K562 (cell line): ENCODE measurements at regions of chr1 and their contacts with region 1.

Region 1: DNA sequence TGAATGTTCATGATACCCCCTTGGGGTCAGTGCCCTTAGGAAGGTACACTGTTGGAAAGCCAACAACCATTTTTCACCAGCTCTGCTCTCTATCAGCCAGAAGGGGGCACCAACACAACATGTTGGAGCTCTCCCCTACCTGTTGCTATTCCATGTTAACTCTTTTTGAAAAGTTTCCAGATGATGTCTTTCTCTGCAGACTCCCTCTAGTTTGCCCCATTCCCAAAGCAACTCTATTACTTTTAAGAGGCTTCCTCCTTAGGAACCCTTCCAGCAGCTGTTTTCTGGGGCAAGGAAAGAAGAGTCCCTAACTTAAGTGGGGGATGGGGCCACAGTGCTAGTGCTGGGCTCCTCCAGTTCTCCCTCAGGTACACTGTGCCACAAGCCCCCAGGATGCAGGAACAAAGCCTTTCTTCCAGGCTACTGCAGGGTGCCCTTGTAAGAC is 22.9 kb upstream of the NDC1 start:
- DNase-seq: peak; percentile 70 to 82 (median 80)
- ATAC-seq: peak; percentile 97
- H3K4me3 ChIP-seq: no peak overlapping the region
- H3K27ac ChIP-seq: no peak overlapping the region
- H3K4me1 ChIP-seq: no peaks in the 10 kb centered on the region
- H3K27me3 ChIP-seq: no peaks in the 10 kb centered on the region
- CTCF ChIP-seq: peak; percentile 87 to 95 (median 91)
- EP300 ChIP-seq: no peak
- POLR2A ChIP-seq: no peak
- RAD21 ChIP-seq: peak; percentile 81 to 92

Region 2: DNA sequence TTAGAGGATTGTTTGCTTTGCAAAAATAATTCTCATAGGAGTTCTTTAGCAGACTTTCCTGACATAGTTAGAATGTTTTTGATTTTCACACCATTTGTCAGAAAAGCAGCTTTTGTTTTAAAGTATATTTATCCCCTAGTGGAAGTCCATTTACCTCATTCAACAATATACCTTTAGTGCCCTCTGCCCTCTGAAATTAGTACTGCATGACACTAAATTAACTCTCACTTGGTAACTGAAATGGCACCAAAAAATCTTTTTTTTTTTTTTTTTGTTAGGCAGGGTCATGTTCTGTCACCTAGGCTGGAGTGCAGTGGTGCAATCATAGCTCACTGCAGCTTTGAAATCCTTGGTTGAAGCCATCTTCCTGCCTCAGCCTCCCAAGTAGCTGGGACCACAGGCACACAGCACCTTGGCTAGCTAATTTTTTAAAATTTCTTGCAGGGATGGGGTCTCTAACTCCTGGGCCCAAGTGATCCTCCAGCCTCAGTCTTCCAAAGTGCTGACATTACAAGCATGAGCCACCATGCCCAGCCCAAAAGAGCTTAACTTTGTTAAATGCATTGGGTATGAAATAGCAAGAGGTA is 98.8 kb after region 1 on chr1:
- CTCF ChIA-PET with region 1: interaction called, 18 read pairs
- POLR2A ChIA-PET with region 1: interaction called, 9 read pairs
- in situ Hi-C with region 1: no loop called
- intact Hi-C with region 1: loop called (anchors 1 kb)
- DNase-seq: peak in 3 of 4 experiments; percentile 35 to 45 (median 43)
- ATAC-seq: peak; percentile 76
- H3K4me3 ChIP-seq: no peak overlapping the region
- H3K27ac ChIP-seq: no peak overlapping the region
- H3K4me1 ChIP-seq: peaks cover 0 to 28% of the 10 kb centered on the region in 2 experiments; a peak in 3 of 5 replicates
- H3K27me3 ChIP-seq: no peaks in the 10 kb centered on the region
- CTCF ChIP-seq: peak; percentile 64 to 87 (median 87); a peak in 5 of 6 replicates
- EP300 ChIP-seq: no peak
- POLR2A ChIP-seq: no peak
- RAD21 ChIP-seq: peak; percentile 65 to 83

Region 3: DNA sequence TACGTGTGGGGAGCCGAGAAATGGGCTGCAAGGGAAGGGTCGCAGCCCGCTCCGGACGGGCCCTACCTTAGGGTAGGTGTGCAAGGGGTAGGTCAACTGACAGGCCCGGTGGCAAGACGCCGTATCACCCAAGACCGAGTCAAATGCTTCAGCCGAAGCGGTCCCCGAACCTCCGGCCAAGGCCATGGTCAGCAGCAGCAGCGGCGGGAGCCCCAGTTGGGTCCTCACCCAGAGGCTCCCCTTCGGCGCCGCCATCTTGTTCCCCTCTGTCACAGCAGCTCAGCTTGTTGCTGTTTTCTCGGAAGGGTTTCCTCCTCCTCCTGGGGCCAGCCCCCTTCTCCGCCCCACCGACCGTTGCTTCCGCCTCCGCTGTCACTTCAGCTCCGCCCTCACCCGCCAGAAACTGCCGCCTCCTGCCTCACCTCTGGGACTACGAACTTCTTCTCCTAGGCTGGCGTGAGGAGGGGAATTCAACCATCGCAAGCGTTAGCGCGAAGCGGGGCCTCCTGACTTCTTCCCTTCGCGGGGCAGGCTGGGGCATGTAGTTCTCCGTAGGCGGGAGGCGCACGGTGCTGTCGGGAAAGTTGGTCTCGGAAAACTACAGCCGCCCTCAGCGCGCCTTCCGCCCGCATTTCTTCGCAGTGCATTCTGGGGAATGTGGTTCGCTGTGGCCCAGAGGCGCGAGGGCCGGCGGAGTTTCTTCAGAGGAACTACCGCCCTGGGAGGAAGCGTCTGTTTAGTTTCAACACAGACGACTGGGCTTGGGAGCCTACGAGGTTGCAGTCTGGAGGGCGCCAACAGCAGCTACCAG is 192.2 kb after region 1 on chr1 and contains the starts of genes TCEANC2 and TMEM59:
- CTCF ChIA-PET with region 1: no interaction called
- POLR2A ChIA-PET with region 1: interaction called, 3 read pairs
- in situ Hi-C with region 1: no loop called
- intact Hi-C with region 1: loop called (anchors 2 kb)
- DNase-seq: peak; percentile 93 to 99 (median 94)
- ATAC-seq: peak; percentile 94
- H3K4me3 ChIP-seq: peak within 1 kb of the TSS; percentile 78
- H3K27ac ChIP-seq: peak within 1 kb of the TSS; percentile 87
- H3K4me1 ChIP-seq: peaks cover 8% of the 10 kb centered on the region in 2 experiments; a peak in 4 of 5 replicates
- H3K27me3 ChIP-seq: no peaks in the 10 kb centered on the region
- CTCF ChIP-seq: no peak
- EP300 ChIP-seq: peak; percentile 21; the same call in 1 of the 2 replicates
- POLR2A ChIP-seq: peak; percentile 82
- RAD21 ChIP-seq: no peak
- polyA plus RNA-seq, gene TCEANC2: 9.8 to 10.2 TPM
- polyA plus RNA-seq, gene TMEM59: 196 to 202 TPM

Region 4: GRCh38 chr1:54081306-54082270 is 220.6 kb after region 1 on chr1:
- CTCF ChIA-PET with region 1: interaction called, 4 read pairs
- POLR2A ChIA-PET with region 1: interaction called, 3 read pairs
- in situ Hi-C with region 1: loop called (anchors 10 kb)
- intact Hi-C with region 1: loop called (anchors 5 kb)
- DNase-seq: peak; percentile 79 to 89 (median 83)
- ATAC-seq: peak; percentile 100
- H3K4me3 ChIP-seq: no peak overlapping the region
- H3K27ac ChIP-seq: no peak overlapping the region
- H3K4me1 ChIP-seq: peaks cover 0 to 6% of the 10 kb centered on the region in 2 experiments; a peak in 2 of 5 replicates
- H3K27me3 ChIP-seq: no peaks in the 10 kb centered on the region
- CTCF ChIP-seq: peak; percentile 84 to 98 (median 92)
- EP300 ChIP-seq: peak; percentile 5; the same call in 1 of the 2 replicates
- POLR2A ChIP-seq: no peak
- RAD21 ChIP-seq: peak; percentile 68 to 85

Region 5: GRCh38 chr1:54474639-54475251 is 613.8 kb after region 1 on chr1:
- CTCF ChIA-PET with region 1: no interaction called
- POLR2A ChIA-PET with region 1: no interaction called
- in situ Hi-C with region 1: no loop called
- intact Hi-C with region 1: no loop called
- DNase-seq: peak; percentile 50 to 94 (median 78)
- ATAC-seq: peak; percentile 71
- H3K4me3 ChIP-seq: no peak overlapping the region
- H3K27ac ChIP-seq: no peak overlapping the region
- H3K4me1 ChIP-seq: peaks cover 21 to 24% of the 10 kb centered on the region in 2 experiments
- H3K27me3 ChIP-seq: no peaks in the 10 kb centered on the region
- CTCF ChIP-seq: no peak
- EP300 ChIP-seq: no peak
- POLR2A ChIP-seq: no peak
- RAD21 ChIP-seq: no peak

Region 6: DNA sequence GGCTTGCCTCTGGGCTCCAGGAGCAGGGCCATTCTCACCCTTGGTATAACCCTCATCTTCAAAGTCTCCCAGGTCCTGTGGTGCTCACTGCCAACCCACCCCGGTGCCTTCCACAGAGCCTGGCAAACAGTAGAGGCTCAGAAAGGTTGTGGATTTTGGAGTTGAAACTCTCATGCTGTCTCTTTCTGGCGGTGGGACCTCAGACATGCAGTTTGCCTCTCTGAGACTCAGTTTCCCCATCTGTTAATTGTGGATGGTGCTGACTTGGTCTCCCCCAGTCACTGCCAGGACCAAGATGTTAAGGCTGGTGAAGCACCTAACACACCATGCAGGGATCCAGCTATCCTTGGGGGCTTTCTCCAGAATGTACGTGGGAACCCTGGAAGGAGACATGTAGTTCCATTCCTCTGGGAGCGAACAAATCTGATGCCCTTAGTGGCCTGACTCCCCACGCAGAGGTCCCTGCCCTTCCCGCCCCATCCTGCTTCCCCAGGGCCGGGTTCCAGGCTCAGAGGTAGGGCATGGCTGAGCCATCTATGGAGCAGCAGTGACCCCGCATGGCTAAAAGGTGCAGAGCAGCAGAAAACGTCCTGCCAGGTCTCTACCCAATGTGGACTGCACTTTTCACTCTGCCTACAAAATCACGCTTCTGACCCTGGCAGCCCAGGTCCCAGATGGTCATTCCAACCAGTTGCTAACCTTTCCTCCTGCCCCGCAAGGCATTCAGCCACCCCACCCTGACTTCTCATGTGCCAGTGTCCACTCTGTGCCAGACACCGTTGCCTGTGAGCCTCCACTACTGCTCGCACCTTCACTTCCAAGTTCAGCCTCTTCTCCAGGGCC is 949.3 kb after region 1 on chr1:
- CTCF ChIA-PET with region 1: interaction called, 4 read pairs
- POLR2A ChIA-PET with region 1: no interaction called
- in situ Hi-C with region 1: no loop called
- intact Hi-C with region 1: loop called (anchors 2 kb)
- DNase-seq: peak; percentile 70 to 80 (median 79)
- ATAC-seq: peak; percentile 95
- H3K4me3 ChIP-seq: no peak overlapping the region
- H3K27ac ChIP-seq: no peak overlapping the region
- H3K4me1 ChIP-seq: peaks cover 0 to 6% of the 10 kb centered on the region in 2 experiments; a peak in 1 of 5 replicates
- H3K27me3 ChIP-seq: peaks cover 22 to 60% of the 10 kb centered on the region in 2 experiments
- CTCF ChIP-seq: peak; percentile 84 to 93 (median 92)
- EP300 ChIP-seq: no peak
- POLR2A ChIP-seq: no peak
- RAD21 ChIP-seq: peak; percentile 87 to 93